ENCODE measurements at regions of chr19 and their contacts with region 1.

Region 1: DNA sequence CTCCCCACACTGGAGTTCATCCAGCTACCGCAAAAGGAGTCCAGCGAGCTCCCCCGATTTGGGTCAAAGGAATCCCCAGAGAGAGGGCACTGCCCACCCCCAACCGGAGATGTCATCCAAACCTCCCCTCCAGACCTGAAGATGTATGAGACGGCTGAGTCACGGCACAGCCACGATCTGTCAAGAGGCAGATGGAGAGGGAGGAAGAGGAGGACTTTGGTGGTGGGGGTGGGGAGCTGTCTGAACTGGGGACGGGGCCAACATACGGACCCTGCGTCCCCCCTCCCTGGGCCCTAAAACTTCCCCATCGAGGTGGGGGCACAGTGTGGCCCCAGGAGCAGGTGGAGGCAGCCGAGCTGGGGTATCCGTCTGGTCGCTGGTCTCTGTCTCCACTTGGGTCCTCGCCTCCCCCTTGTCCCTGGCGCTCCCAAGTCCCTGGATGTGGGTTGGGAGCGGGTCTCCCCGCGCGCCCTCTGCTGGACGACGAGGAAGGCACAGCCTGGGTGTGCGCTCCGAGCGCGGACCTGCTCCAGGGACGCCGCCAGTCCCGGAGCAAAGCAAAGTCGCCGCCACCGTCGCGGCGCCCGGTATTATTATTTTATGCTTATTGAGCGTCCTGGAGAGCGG is 3.8 kb downstream of the PDE4A start:
- DNase-seq: peak; percentile 66
- H3K4me3 Mint-ChIP-seq: peak overlapping the region; percentile 96
- H3K27ac Mint-ChIP-seq: peak overlapping the region; percentile 73
- H3K4me1 Mint-ChIP-seq: peaks cover 59% of the 10 kb centered on the region
- H3K27me3 Mint-ChIP-seq: peaks cover 1% of the 10 kb centered on the region

Region 2: GRCh38 chr19:10408511-10409283 is 15.4 kb before region 1 on chr19:
- intact Hi-C with region 1: loop called (anchors 1 kb)
- DNase-seq: peak; percentile 73
- H3K4me3 Mint-ChIP-seq: peak overlapping the region; percentile 63
- H3K27ac Mint-ChIP-seq: peak overlapping the region; percentile 92
- H3K4me1 Mint-ChIP-seq: peaks cover 63% of the 10 kb centered on the region
- H3K27me3 Mint-ChIP-seq: no peaks in the 10 kb centered on the region

Region 3: GRCh38 chr19:10478903-10479384 is 54.8 kb after region 1 on chr19:
- intact Hi-C with region 1: loop called (anchors 5 kb)
- DNase-seq: peak; percentile 86
- H3K4me3 Mint-ChIP-seq: peak overlapping the region; percentile 60
- H3K27ac Mint-ChIP-seq: peak overlapping the region; percentile 38
- H3K4me1 Mint-ChIP-seq: peaks cover 12% of the 10 kb centered on the region
- H3K27me3 Mint-ChIP-seq: no peaks in the 10 kb centered on the region

Region 4: GRCh38 chr19:10505583-10506229 is 81.6 kb after region 1 on chr19:
- intact Hi-C with region 1: no loop called
- DNase-seq: peak; percentile 77
- H3K4me3 Mint-ChIP-seq: peak overlapping the region; percentile 1
- H3K27ac Mint-ChIP-seq: peak overlapping the region; percentile 50
- H3K4me1 Mint-ChIP-seq: peaks cover 25% of the 10 kb centered on the region
- H3K27me3 Mint-ChIP-seq: no peaks in the 10 kb centered on the region